ENCODE measurements at regions of chr6 and their contacts with region 1.

Region 1: DNA sequence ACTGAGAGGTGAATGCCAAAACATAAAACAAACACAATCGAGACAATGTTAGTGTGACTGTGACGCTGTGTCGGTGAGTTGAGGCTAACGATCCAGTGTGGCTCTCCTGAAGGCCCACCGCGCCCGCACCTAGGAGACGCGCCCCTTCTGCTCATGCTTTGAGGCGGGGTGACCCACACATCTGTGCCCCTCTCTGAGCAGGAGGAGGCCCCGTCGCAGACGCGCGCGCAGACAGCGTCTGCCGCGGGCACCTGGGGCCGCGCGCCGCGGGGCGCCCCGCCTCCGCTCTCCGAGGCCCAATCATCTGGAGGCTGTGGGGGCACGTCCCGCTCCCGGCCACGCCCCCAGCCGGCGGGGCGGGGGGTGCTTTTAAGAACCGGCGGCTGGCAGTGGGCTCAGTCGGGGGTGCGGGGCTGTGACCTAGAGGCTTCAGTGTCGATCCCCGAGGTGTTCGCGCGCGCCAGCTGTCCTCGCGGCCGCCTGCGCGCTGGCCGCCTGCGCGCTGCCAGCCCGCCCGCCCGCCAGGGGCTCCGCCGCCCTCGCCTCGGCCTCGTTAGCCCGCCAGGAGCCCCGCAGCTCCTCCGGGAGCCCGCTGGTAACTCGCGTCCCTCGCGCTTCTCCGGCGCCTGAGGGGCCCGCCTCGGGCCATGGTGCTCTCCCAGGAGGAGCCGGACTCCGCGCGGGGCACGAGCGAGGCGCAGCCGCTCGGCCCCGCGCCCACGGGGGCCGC is at the start of gene SLC16A10:
- DNase-seq: peak; percentile 75 to 92 (median 90)
- ATAC-seq: peak; percentile 95
- H3K4me3 ChIP-seq: peak within 1 kb of the TSS; percentile 83
- H3K4me3 Mint-ChIP-seq: peak within 1 kb of the TSS; percentile 85 to 100 (median 97)
- H3K27ac ChIP-seq: peak within 1 kb of the TSS; percentile 80
- H3K27ac Mint-ChIP-seq: peak within 1 kb of the TSS; percentile 54 to 99 (median 96)
- H3K4me1 ChIP-seq: peaks cover 10 to 17% of the 10 kb centered on the region in 2 donors
- H3K4me1 Mint-ChIP-seq: peaks cover 20 to 54% (median 48%) of the 10 kb centered on the region in 7 donors
- H3K27me3 ChIP-seq: no peaks in the 10 kb centered on the region
- H3K27me3 Mint-ChIP-seq: peaks cover 0 to 24% (median 0%) of the 10 kb centered on the region in 5 donors
- total RNA-seq, gene SLC16A10: 1.6 to 27.7 (median 16.7) TPM

Region 2: GRCh38 chr6:110958329-110959192 is 128.7 kb before region 1 on chr6 and contains the start of gene GTF3C6:
- CTCF ChIA-PET with region 1: no interaction called
- POLR2A ChIA-PET with region 1: interaction called, 4 read pairs
- intact Hi-C with region 1: loop called in 1 of 2 experiments (anchors 2 kb)
- DNase-seq: peak; percentile 85 to 94 (median 91)
- ATAC-seq: peak; percentile 99
- H3K4me3 ChIP-seq: peak within 1 kb of the TSS; percentile 86
- H3K4me3 Mint-ChIP-seq: peak within 1 kb of the TSS; percentile 95 to 99 (median 96)
- H3K27ac ChIP-seq: peak within 1 kb of the TSS; percentile 81
- H3K27ac Mint-ChIP-seq: peak within 1 kb of the TSS; percentile 96 to 99 (median 97)
- H3K4me1 ChIP-seq: peaks cover 4% of the 10 kb centered on the region in 2 donors
- H3K4me1 Mint-ChIP-seq: peaks cover 13 to 27% (median 20%) of the 10 kb centered on the region in 7 donors
- H3K27me3 ChIP-seq: no peaks in the 10 kb centered on the region
- H3K27me3 Mint-ChIP-seq: peaks cover 0 to 7% (median 0%) of the 10 kb centered on the region in 5 donors
- total RNA-seq, gene GTF3C6: 18.1 to 100 (median 29.9) TPM

Region 3: GRCh38 chr6:110981202-110981600 is 106.1 kb before region 1 on chr6:
- CTCF ChIA-PET with region 1: no interaction called
- POLR2A ChIA-PET with region 1: no interaction called
- intact Hi-C with region 1: loop called (anchors 2 to 5 kb)
- DNase-seq: peak in 1 of 9 donors; percentile 28
- ATAC-seq: no peak
- H3K4me3 ChIP-seq: peak overlapping the region; percentile 81
- H3K4me3 Mint-ChIP-seq: peak overlapping the region; percentile 95 to 99 (median 98)
- H3K27ac ChIP-seq: peak overlapping the region; percentile 92
- H3K27ac Mint-ChIP-seq: peak overlapping the region; percentile 96 to 100 (median 99)
- H3K4me1 ChIP-seq: peaks cover 0 to 11% of the 10 kb centered on the region in 2 donors
- H3K4me1 Mint-ChIP-seq: peaks cover 19 to 46% (median 35%) of the 10 kb centered on the region in 7 donors
- H3K27me3 ChIP-seq: no peaks in the 10 kb centered on the region
- H3K27me3 Mint-ChIP-seq: no peaks in the 10 kb centered on the region

Region 4: DNA sequence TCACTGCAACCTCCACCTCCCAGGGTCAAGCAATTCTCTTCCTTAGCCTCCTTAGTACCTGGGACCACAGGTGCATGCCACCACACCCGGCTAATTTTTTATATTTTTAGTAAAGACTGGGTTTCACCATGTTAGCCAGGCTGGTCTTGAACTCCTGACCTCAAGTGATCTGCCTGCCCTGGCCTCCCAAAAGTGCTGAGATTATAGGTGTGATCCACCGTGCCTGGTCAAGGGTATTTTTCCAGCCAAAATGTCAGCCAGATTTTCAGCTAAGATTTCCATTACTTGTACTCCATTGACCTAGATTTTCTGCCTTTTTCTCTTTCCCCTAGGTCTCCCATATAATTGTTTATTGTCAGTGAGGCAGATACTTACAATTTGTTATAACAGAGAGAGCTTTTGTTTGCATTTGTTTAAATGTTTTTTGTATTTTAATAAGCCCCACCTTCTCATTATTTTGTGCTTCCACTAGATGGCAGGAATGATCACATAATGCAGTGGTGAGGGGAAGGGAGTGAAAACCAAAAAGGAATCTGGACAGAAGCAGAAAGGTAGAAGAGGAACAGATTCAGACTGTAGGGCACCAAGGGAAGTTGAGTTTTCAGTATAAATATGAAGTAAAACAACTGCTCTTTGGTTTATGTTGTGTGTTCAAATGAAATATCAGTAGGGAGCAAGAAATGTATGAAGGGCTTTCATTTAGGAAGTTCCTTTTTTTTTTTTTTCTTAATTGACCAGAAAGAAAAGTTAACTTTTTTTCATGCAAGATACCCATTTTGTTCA is 75.7 kb before region 1 on chr6:
- CTCF ChIA-PET with region 1: interaction called, 3 read pairs
- POLR2A ChIA-PET with region 1: no interaction called
- intact Hi-C with region 1: loop called in 1 of 2 experiments (anchors 2 kb)
- DNase-seq: peak in 7 of 9 donors; percentile 18 to 58 (median 50)
- ATAC-seq: peak; percentile 71
- H3K4me3 ChIP-seq: no peak overlapping the region
- H3K4me3 Mint-ChIP-seq: no peak overlapping the region
- H3K27ac ChIP-seq: no peak overlapping the region
- H3K27ac Mint-ChIP-seq: peak overlapping the region in 1 of 9 donors; percentile 16
- H3K4me1 ChIP-seq: no peaks in the 10 kb centered on the region
- H3K4me1 Mint-ChIP-seq: peaks cover 3 to 13% (median 5%) of the 10 kb centered on the region in 7 donors
- H3K27me3 ChIP-seq: no peaks in the 10 kb centered on the region
- H3K27me3 Mint-ChIP-seq: no peaks in the 10 kb centered on the region

Region 5: GRCh38 chr6:111113336-111114086 is 26.2 kb after region 1 on chr6:
- CTCF ChIA-PET with region 1: no interaction called
- POLR2A ChIA-PET with region 1: interaction called, 6 read pairs
- intact Hi-C with region 1: loop called in 1 of 2 experiments (anchors 1 kb)
- DNase-seq: peak in 4 of 9 donors; percentile 23 to 33 (median 23)
- ATAC-seq: peak; percentile 75
- H3K4me3 ChIP-seq: peak overlapping the region; percentile 1
- H3K4me3 Mint-ChIP-seq: peak overlapping the region; percentile 13 to 90 (median 74)
- H3K27ac ChIP-seq: peak overlapping the region; percentile 58
- H3K27ac Mint-ChIP-seq: peak overlapping the region; percentile 53 to 96 (median 93)
- H3K4me1 ChIP-seq: peaks cover 5 to 26% of the 10 kb centered on the region in 2 donors
- H3K4me1 Mint-ChIP-seq: peaks cover 12 to 74% (median 46%) of the 10 kb centered on the region in 7 donors
- H3K27me3 ChIP-seq: no peaks in the 10 kb centered on the region
- H3K27me3 Mint-ChIP-seq: no peaks in the 10 kb centered on the region

Region 6: DNA sequence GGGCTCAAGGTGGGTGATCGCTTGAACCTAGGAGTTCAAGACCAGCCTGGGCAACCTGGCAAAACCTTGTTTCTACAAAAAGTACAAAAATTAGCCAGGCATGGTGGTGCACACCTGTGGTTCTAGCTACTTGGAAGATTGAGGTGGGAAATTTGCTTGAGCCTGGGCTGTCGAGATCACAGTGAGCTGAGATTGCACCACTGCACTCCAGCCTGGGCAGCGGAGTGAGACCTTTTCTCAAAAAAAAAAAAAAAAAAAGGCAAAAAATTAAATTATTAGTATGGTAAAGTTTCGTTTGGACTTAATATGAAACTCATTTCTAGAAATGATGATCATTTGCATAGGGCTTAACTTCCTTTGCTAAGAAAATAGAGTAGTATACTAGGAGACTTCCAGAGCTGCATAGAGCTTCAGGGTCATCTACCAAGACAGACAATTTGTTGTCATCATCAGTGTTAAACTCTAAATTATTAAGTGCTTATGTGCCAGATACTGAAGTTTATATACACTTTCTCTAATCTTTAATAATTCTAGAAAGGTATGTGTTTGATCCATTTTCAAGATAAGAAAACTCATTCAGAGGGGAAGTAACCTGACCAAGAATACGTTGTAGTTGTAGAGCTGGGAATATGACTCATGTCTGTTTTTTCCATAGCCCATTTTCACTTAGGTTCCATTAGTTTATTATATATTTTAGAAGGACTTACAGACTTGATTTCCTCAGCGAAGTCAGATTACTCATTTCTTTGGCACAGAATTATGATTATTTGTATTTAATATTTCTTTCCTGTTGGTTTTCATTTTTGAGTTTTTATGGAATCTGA is 84.5 kb after region 1 on chr6:
- CTCF ChIA-PET with region 1: no interaction called
- POLR2A ChIA-PET with region 1: no interaction called
- intact Hi-C with region 1: loop called in 1 of 2 experiments (anchors 1 kb)
- DNase-seq: no peak
- ATAC-seq: no peak
- H3K4me3 ChIP-seq: no peak overlapping the region
- H3K4me3 Mint-ChIP-seq: no peak overlapping the region
- H3K27ac ChIP-seq: no peak overlapping the region
- H3K27ac Mint-ChIP-seq: no peak overlapping the region
- H3K4me1 ChIP-seq: peaks cover 0 to 20% of the 10 kb centered on the region in 2 donors
- H3K4me1 Mint-ChIP-seq: peaks cover 10 to 40% (median 26%) of the 10 kb centered on the region in 7 donors
- H3K27me3 ChIP-seq: no peaks in the 10 kb centered on the region
- H3K27me3 Mint-ChIP-seq: no peaks in the 10 kb centered on the region

Region 7: GRCh38 chr6:111210194-111210728 is 123.0 kb after region 1 on chr6:
- CTCF ChIA-PET with region 1: interaction called, 5 read pairs
- POLR2A ChIA-PET with region 1: interaction called, 3 read pairs
- intact Hi-C with region 1: loop called in 1 of 2 experiments (anchors 1 kb)
- DNase-seq: peak in 7 of 9 donors; percentile 46 to 73 (median 63)
- ATAC-seq: peak; percentile 88
- H3K4me3 ChIP-seq: no peak overlapping the region
- H3K4me3 Mint-ChIP-seq: no peak overlapping the region
- H3K27ac ChIP-seq: no peak overlapping the region
- H3K27ac Mint-ChIP-seq: peak overlapping the region in 1 of 9 donors; percentile 8
- H3K4me1 ChIP-seq: no peaks in the 10 kb centered on the region
- H3K4me1 Mint-ChIP-seq: peaks cover 0 to 18% (median 9%) of the 10 kb centered on the region in 7 donors
- H3K27me3 ChIP-seq: no peaks in the 10 kb centered on the region
- H3K27me3 Mint-ChIP-seq: no peaks in the 10 kb centered on the region

Measured in naive thymus-derived CD4-positive, alpha-beta T cell (primary cell).